K562 (cell line): ENCODE measurements at regions of chr2 and their contacts with region 1.

Region 1: DNA sequence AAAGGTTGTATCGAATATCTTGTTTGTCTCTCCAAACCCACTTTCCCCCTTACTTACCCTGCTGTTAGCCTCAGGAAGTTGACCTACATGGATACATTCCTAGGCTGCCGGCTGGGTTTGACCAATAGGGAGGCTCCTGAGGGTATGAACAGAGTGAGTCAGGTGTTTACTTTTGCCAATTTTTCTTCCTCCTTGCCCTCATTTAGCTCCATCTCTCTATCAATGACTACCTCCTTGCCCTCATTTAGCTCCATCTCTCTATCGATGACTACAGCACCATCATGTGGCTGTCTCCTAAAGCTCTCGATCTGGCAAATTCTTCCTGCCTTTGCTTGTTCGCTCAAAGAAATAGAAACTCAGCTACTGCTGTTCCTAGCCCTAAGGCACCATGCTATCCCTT is 571.9 kb upstream of the CRIM1 start:
- DNase-seq: peak in 2 of 4 experiments; percentile 1
- ATAC-seq: no peak
- H3K4me3 ChIP-seq: no peak overlapping the region
- H3K27ac ChIP-seq: no peak overlapping the region
- H3K4me1 ChIP-seq: no peaks in the 10 kb centered on the region
- H3K27me3 ChIP-seq: no peaks in the 10 kb centered on the region
- CTCF ChIP-seq: no peak
- EP300 ChIP-seq: no peak
- POLR2A ChIP-seq: no peak
- RAD21 ChIP-seq: no peak

Region 2: DNA sequence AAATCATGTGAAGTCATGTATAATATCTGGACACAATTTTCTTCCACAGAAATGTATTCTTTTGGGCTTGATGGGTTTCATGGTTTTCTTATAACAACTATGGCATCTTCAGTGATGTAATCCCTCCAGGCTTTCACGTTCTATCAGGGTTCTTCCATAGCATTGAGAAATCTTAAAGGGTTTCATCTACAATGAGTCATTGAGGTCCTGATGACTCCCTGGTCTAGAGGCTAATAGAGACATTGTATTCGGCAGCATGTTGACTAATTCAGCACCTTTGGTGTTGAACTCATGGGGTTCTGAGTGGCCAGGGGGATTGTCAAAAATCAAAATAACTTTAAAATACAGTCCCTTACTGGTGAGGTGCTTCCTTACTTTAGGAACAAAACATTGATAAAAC is 42.2 kb before region 1 on chr2:
- CTCF ChIA-PET with region 1: no interaction called
- POLR2A ChIA-PET with region 1: no interaction called
- in situ Hi-C with region 1: loop called (anchors 5 kb)
- intact Hi-C with region 1: no loop called
- DNase-seq: no peak
- ATAC-seq: no peak
- H3K4me3 ChIP-seq: no peak overlapping the region
- H3K27ac ChIP-seq: no peak overlapping the region
- H3K4me1 ChIP-seq: no peaks in the 10 kb centered on the region
- H3K27me3 ChIP-seq: no peaks in the 10 kb centered on the region
- CTCF ChIP-seq: no peak
- EP300 ChIP-seq: no peak
- POLR2A ChIP-seq: no peak
- RAD21 ChIP-seq: no peak